Naive thymus-derived CD4-positive, alpha-beta T cell (primary cell): ENCODE measurements at regions of chr6 and their contacts with region 1.

Region 1: GRCh38 chr6:153002607-153003365 is at the start of gene MTRF1L:
- DNase-seq: peak; percentile 52 to 84 (median 70)
- ATAC-seq: peak; percentile 92
- H3K4me3 ChIP-seq: peak within 1 kb of the TSS; percentile 63
- H3K4me3 Mint-ChIP-seq: peak within 1 kb of the TSS; percentile 85 to 99 (median 96)
- H3K27ac ChIP-seq: peak within 1 kb of the TSS; percentile 73
- H3K27ac Mint-ChIP-seq: peak within 1 kb of the TSS; percentile 86 to 98 (median 93)
- H3K4me1 ChIP-seq: peaks cover 18% of the 10 kb centered on the region in 2 donors
- H3K4me1 Mint-ChIP-seq: peaks cover 24 to 59% (median 49%) of the 10 kb centered on the region in 7 donors
- H3K27me3 ChIP-seq: no peaks in the 10 kb centered on the region
- H3K27me3 Mint-ChIP-seq: peaks cover 0 to 18% (median 0%) of the 10 kb centered on the region in 5 donors
- total RNA-seq, gene MTRF1L: 8.9 to 18.1 (median 13.5) TPM

Region 2: DNA sequence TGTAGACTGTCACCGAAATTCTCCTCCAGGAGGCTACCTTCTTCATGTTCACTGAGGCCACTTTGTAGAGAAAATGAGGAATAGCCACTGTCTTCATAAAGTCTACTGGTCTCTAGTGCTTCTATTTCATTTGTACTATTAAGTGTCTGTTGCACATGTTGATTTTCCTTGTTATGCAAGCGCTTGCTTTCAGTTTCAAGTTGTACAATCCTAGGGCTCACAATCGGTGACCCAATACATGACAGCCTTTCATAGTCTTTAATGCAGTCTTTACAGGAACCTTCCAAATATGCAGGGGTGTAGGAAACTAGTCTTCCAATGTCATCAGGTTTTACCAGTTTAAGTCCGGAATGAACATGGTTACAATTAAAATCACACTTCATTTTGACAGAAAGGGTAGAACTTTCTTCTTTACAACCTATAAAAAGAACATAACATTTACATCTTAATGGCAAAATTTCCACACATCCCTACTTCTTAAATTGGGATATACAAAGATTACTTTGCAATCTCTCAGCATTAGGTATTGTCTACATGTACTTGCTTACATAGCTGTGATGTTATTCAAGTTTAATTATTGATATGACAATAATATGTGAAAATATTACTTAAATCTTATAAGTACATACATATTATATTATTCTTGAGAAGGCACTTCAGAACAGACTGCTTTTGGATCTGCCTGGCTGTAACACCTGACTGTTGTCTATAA is 27.4 kb before region 1 on chr6:
- CTCF ChIA-PET with region 1: no interaction called
- POLR2A ChIA-PET with region 1: no interaction called
- intact Hi-C with region 1: loop called in 1 of 2 experiments (anchors 5 kb)
- DNase-seq: no peak
- ATAC-seq: peak; percentile 90
- H3K4me3 ChIP-seq: no peak overlapping the region
- H3K4me3 Mint-ChIP-seq: peak overlapping the region in 2 of 10 donors; percentile 22 to 73
- H3K27ac ChIP-seq: no peak overlapping the region
- H3K27ac Mint-ChIP-seq: peak overlapping the region in 1 of 9 donors; percentile 76
- H3K4me1 ChIP-seq: peaks cover 0 to 5% of the 10 kb centered on the region in 2 donors
- H3K4me1 Mint-ChIP-seq: peaks cover 21 to 65% (median 29%) of the 10 kb centered on the region in 7 donors
- H3K27me3 ChIP-seq: no peaks in the 10 kb centered on the region
- H3K27me3 Mint-ChIP-seq: no peaks in the 10 kb centered on the region

Region 3: DNA sequence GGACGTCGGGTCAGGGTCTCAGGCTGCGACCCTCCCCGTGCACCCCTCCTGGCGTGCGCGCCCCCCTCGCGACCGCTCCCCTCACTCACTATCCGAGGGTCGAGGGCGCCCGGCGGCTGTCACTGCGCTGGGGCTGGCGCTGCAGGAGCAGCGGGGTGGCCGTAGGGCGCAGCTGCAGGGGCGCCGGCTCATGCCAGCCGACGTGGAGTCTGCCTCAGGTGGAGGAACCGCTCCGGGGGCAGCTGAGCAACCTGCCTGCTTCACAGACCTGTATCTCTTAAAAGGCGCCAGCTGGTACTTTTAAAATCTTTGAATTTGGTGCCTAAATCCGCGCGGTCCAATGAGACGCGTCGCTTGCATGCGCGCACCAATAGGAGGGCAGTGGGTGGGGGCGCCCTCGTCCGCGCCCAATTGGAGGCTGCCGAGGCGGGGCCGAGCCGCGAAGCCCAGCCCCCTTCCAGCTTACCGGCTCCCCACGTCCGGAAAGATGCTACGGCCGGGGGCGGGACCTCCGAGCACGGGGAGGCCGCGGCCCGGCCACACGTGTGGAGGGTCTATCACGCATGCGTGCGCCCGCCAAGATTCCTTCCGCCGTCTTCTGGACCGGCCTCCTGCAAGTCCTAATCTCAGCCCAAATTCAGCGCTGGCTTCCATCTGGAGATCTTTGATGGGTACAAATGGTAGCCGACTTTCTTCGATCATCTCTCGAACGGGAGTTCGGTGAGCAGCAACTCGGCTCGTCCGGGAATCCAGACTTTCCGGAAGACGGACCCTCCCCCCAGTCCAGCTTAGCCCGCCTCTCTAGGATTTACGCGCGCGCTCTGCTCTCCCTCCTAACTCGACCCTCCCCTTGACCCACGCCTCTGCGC is 19.8 kb before region 1 on chr6 and contains the start of gene FBXO5:
- CTCF ChIA-PET with region 1: interaction called, 3 read pairs
- POLR2A ChIA-PET with region 1: interaction called, 16 read pairs
- intact Hi-C with region 1: loop called (anchors 1 kb)
- DNase-seq: peak; percentile 94 to 98 (median 96)
- ATAC-seq: peak; percentile 97
- H3K4me3 ChIP-seq: peak within 1 kb of the TSS; percentile 94
- H3K4me3 Mint-ChIP-seq: peak within 1 kb of the TSS; percentile 92 to 100 (median 96)
- H3K27ac ChIP-seq: peak within 1 kb of the TSS; percentile 89
- H3K27ac Mint-ChIP-seq: peak within 1 kb of the TSS; percentile 87 to 99 (median 95)
- H3K4me1 ChIP-seq: peaks cover 10 to 20% of the 10 kb centered on the region in 2 donors
- H3K4me1 Mint-ChIP-seq: peaks cover 33 to 58% (median 43%) of the 10 kb centered on the region in 7 donors
- H3K27me3 ChIP-seq: no peaks in the 10 kb centered on the region
- H3K27me3 Mint-ChIP-seq: no peaks in the 10 kb centered on the region
- total RNA-seq, gene FBXO5: 3.2 to 50.2 (median 9.2) TPM